Activated CD4-positive, alpha-beta T cell treated with anti-CD3 and anti-CD28 coated beads for 36 hours (primary cell): ENCODE measurements at regions of chr14 and their contacts with region 1.

Region 1: GRCh38 chr14:70086685-70087379 is 101.9 kb downstream of the SLC8A3 start:
- DNase-seq: peak; percentile 51
- ATAC-seq: no peak
- H3K4me3 Mint-ChIP-seq: no peak overlapping the region
- H3K27ac Mint-ChIP-seq: no peak overlapping the region
- H3K4me1 Mint-ChIP-seq: no peaks in the 10 kb centered on the region
- H3K27me3 Mint-ChIP-seq: peaks cover 27% of the 10 kb centered on the region

Region 2: GRCh38 chr14:70254476-70254961 is 167.7 kb after region 1 on chr14:
- CTCF ChIA-PET with region 1: no interaction called
- POLR2A ChIA-PET with region 1: no interaction called
- intact Hi-C with region 1: loop called in 1 of 2 experiments (anchors 10 kb)
- DNase-seq: peak; percentile 25
- ATAC-seq: peak; percentile 49
- H3K4me3 Mint-ChIP-seq: peak overlapping the region; percentile 16
- H3K27ac Mint-ChIP-seq: no peak overlapping the region
- H3K4me1 Mint-ChIP-seq: peaks cover 6% of the 10 kb centered on the region
- H3K27me3 Mint-ChIP-seq: peaks cover 56% of the 10 kb centered on the region

Region 3: GRCh38 chr14:70317969-70318634 is 231.3 kb after region 1 on chr14:
- CTCF ChIA-PET with region 1: interaction called, 3 read pairs
- POLR2A ChIA-PET with region 1: no interaction called
- intact Hi-C with region 1: loop called in 1 of 2 experiments (anchors 5 kb)
- DNase-seq: peak; percentile 20
- ATAC-seq: peak; percentile 53
- H3K4me3 Mint-ChIP-seq: no peak overlapping the region
- H3K27ac Mint-ChIP-seq: no peak overlapping the region
- H3K4me1 Mint-ChIP-seq: no peaks in the 10 kb centered on the region
- H3K27me3 Mint-ChIP-seq: peaks cover 1% of the 10 kb centered on the region

Region 4: GRCh38 chr14:70567791-70568190 is 481.0 kb after region 1 on chr14:
- CTCF ChIA-PET with region 1: interaction called, 4 read pairs
- POLR2A ChIA-PET with region 1: no interaction called
- intact Hi-C with region 1: loop called in 1 of 2 experiments (anchors 1 kb)
- DNase-seq: peak; percentile 41
- ATAC-seq: peak; percentile 63
- H3K4me3 Mint-ChIP-seq: no peak overlapping the region
- H3K27ac Mint-ChIP-seq: no peak overlapping the region
- H3K4me1 Mint-ChIP-seq: peaks cover 17% of the 10 kb centered on the region
- H3K27me3 Mint-ChIP-seq: no peaks in the 10 kb centered on the region

Region 5: DNA sequence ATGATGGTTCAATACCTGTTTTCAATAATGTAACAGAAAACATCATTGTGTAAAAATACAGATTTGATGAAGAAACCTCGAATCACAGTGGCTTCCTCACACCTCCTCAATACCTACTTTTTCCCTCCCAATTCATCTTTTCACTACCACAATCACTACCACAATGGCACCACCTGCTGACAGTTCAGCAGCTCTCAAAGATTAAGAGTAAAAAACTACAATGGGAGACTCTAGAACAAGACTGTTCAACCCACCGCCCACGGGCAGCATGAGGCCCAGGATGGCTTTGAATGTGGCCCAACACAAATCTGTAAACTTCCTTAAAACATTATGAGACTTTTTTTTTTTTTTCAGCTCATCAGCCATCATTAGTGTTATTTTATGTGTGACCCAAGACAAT is 498.4 kb after region 1 on chr14:
- CTCF ChIA-PET with region 1: no interaction called
- POLR2A ChIA-PET with region 1: no interaction called
- intact Hi-C with region 1: loop called in 1 of 2 experiments (anchors 1 kb)
- DNase-seq: peak; percentile 68
- ATAC-seq: peak; percentile 75
- H3K4me3 Mint-ChIP-seq: no peak overlapping the region
- H3K27ac Mint-ChIP-seq: peak overlapping the region; percentile 12
- H3K4me1 Mint-ChIP-seq: peaks cover 6% of the 10 kb centered on the region
- H3K27me3 Mint-ChIP-seq: no peaks in the 10 kb centered on the region

Region 6: GRCh38 chr14:70816525-70816924 is 729.7 kb after region 1 on chr14:
- CTCF ChIA-PET with region 1: no interaction called
- POLR2A ChIA-PET with region 1: no interaction called
- intact Hi-C with region 1: loop called in 1 of 2 experiments (anchors 5 kb)
- DNase-seq: no peak
- ATAC-seq: no peak
- H3K4me3 Mint-ChIP-seq: no peak overlapping the region
- H3K27ac Mint-ChIP-seq: no peak overlapping the region
- H3K4me1 Mint-ChIP-seq: peaks cover 10% of the 10 kb centered on the region
- H3K27me3 Mint-ChIP-seq: peaks cover 15% of the 10 kb centered on the region